Left ventricle myocardium superior (tissue), 1 donor: ENCODE measurements at regions of chr14 and their contacts with region 1.

Region 1: GRCh38 chr14:104976198-104977007 is 1.8 kb downstream of the AHNAK2 start:
- DNase-seq: peak; percentile 91
- ATAC-seq: peak; percentile 66

Region 2: DNA sequence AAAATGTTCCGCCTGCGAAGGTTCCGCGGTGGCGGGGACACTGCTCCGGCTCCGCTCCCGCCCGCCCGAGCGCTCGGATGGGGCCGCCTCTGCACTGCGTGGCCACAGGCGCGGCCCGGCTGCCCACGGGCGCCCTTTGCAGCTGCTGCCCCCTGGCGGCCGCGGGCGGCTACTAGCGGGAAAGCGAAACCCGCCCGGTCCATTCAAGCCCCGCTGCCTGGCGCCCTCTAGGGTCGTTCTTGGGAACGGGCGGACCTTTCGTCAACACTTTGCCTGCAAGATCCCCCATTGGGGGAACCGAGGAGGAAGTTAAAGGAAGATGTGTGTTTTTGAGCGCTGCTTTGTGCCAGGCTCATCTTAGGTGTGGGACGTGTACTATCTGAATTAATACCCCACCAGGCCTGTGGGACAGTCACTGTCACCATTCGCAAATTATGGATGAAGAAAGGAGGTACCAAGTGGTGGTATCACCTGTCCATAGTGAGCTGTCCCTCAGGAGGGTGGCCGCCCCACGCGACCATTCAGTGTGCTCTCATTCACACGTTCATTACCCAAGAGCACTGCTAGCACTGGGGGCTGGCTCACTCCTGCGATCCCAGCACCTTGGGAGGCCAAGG is 69.4 kb after region 1 on chr14:
- intact Hi-C with region 1: loop called (anchors 10 kb)
- DNase-seq: peak; percentile 94
- ATAC-seq: peak; percentile 96